GM13976 (cell line): ENCODE measurements at regions of chrX and their contacts with region 1.

Region 1: DNA sequence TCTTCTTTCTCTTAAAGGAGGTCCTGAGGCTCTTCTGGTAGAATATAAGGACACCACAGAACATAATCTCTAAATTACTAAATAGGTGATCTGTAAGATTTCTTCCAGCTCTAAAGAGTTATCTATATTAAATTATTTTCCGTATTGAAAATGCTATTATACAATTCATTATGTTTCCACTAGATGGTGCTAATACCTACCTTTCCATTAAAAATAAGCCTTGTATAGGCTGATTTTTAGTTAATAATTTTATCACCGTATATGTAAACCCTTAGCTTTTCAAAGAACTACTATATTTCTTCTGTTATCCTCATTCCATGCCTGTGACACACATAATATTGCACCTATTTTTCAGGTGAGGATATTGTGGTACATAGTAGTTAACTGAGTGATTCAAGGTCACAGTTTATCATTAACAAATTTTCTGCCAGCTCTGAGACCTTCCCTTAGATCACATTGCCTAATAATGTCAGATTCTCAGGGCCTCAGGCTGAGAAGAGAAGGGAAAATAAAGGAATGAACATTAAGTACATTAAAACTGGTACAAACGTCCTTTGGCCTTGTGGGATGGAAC is 138.8 kb downstream of the TEX11 start:
- DNase-seq: peak; percentile 20
- CTCF ChIP-seq: no peak

Region 2: DNA sequence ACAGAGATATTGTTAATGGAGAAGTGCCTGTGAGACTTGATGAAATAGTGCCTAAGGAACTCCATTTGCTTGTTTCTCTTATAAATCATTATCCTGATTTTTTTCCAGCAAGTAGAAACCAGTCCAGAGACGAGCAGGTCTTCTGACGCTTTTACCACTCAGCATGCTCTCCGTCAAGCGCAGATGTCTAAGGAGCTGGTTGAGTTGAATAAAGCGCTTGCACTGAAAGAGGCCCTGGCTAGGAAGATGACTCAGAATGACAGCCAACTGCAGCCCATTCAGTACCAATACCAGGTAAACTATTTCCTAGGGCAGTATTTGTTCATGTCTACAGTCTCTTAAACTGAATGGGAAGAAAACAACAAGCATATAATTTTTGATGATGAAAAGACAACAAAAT is 416.2 kb before region 1 on chrX:
- in situ Hi-C with region 1: no loop called
- DNase-seq: no peak
- CTCF ChIP-seq: no peak

Region 3: DNA sequence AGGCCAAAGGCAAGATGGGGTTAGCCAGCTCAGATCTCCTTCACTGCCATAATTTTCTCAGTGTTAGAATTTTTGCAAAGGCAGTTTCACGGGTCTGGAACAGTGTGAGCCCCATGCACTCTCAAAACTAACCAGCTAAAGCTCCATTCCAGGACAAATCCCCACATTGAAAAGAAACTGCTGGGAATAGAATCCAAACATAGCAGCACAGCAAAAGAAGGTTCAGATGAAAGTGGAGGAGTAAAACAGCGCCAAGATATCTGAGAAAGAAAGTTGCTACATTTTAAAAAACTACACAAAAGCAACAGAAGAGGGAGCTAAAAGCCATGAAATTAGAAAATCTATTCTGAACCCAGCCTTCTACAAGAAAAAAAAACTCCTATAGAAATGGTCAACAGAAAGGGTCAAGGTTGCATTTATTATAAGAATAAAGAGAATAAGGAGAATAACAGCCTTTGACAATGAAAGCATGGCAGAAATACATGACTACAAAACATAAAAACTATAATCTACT is 200.8 kb after region 1 on chrX:
- in situ Hi-C with region 1: loop called (anchors 25 kb)
- DNase-seq: peak; percentile 14
- CTCF ChIP-seq: no peak